Naive thymus-derived CD4-positive, alpha-beta T cell (primary cell): ENCODE measurements at regions of chr6 and their contacts with region 1.

Region 1: DNA sequence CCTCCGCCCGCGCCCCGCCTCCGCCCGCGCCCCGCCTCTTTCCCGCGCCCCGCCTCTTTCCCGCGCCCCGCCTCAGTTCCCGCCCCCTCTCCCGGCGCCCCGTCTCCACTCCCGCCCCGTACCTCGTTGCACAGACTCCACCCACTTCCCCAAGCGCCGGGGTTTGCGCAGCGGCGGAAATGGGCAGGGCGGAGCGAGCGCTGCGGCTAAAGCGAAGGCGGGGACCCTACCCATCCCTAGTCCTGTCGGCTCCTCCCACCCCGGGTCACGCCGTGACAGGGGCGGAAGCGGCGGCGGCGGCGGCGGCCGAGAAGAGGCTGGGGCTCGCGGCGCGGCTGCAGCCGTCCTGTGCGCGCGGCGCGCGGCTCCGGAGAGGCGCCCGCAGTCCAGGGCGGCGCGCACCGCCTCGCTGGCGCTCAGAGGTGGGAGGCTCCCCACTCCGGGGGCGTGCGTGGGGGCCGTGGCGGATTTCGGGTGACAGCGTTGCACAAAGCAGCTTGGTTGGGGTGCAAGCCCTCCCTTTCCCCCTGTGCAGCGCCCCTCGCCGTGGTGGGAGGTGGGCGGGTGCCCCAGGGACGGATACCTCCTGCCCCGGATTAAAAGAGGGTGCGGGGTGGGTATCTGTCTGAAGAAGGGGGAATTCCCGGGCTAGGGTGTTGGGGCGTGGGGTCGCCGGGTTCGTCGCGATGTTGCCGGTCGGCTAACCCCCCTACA is at the start of gene KDM1B:
- DNase-seq: peak; percentile 95 to 100 (median 99)
- ATAC-seq: peak; percentile 95
- H3K4me3 ChIP-seq: peak within 1 kb of the TSS; percentile 95
- H3K4me3 Mint-ChIP-seq: peak within 1 kb of the TSS; percentile 91 to 99 (median 99)
- H3K27ac ChIP-seq: peak within 1 kb of the TSS; percentile 93
- H3K27ac Mint-ChIP-seq: peak within 1 kb of the TSS; percentile 91 to 99 (median 97)
- H3K4me1 ChIP-seq: peaks cover 8 to 17% of the 10 kb centered on the region in 2 donors
- H3K4me1 Mint-ChIP-seq: peaks cover 24 to 36% (median 28%) of the 10 kb centered on the region in 7 donors
- H3K27me3 ChIP-seq: no peaks in the 10 kb centered on the region
- H3K27me3 Mint-ChIP-seq: peaks cover 0 to 7% (median 0%) of the 10 kb centered on the region in 5 donors
- total RNA-seq, gene KDM1B: 7.3 to 25.4 (median 12.5) TPM

Region 2: DNA sequence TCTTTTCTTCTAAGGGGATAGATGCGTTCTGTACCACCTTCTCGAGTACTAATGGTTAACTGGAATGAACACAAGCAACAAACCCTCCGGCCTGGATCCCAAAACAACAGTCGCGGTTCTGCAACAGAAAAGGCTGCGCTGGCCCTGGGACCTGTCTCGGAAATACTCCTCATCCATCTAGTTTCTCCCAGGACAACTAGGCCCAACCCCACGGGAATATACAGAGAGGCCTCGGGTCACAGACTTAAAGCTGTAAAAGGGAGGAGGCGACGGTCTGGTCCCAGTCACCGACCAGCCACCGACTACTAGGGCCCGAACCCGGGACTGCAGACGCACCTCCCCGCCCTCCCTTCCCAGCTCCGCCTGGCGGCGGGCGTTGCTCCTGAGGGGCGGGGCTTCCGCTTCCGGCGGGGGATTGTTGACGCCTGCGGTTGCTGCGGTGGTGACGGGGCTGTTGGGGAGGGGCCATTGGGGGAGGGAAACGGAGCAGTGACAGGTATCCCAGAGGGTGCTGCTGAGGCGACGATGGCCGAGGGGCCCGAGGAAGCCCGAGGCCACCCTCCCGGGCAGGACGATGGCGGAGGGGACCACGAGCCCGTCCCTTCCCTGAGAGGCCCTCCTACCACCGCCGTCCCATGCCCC is 555.3 kb before region 1 on chr6 and contains the start of gene FAM8A1:
- CTCF ChIA-PET with region 1: no interaction called
- POLR2A ChIA-PET with region 1: no interaction called
- intact Hi-C with region 1: loop called (anchors 1 kb)
- DNase-seq: peak; percentile 91 to 97 (median 94)
- ATAC-seq: peak; percentile 97
- H3K4me3 ChIP-seq: peak within 1 kb of the TSS; percentile 49
- H3K4me3 Mint-ChIP-seq: peak within 1 kb of the TSS; percentile 85 to 97 (median 94)
- H3K27ac ChIP-seq: peak within 1 kb of the TSS; percentile 94
- H3K27ac Mint-ChIP-seq: peak within 1 kb of the TSS; percentile 84 to 96 (median 93)
- H3K4me1 ChIP-seq: peaks cover 19 to 29% of the 10 kb centered on the region in 2 donors
- H3K4me1 Mint-ChIP-seq: peaks cover 29 to 48% (median 45%) of the 10 kb centered on the region in 7 donors
- H3K27me3 ChIP-seq: no peaks in the 10 kb centered on the region
- H3K27me3 Mint-ChIP-seq: no peaks in the 10 kb centered on the region
- total RNA-seq, gene FAM8A1: 8.0 to 26.1 (median 21.1) TPM

Region 3: GRCh38 chr6:17987576-17988421 is 167.5 kb before region 1 on chr6 and contains the start of gene KIF13A:
- CTCF ChIA-PET with region 1: no interaction called
- POLR2A ChIA-PET with region 1: no interaction called
- intact Hi-C with region 1: loop called (anchors 1 to 5 kb)
- DNase-seq: peak in 6 of 9 donors; percentile 4 to 53 (median 12)
- ATAC-seq: peak; percentile 74
- H3K4me3 ChIP-seq: peak within 1 kb of the TSS; percentile 52
- H3K4me3 Mint-ChIP-seq: peak within 1 kb of the TSS; percentile 86 to 97 (median 90)
- H3K27ac ChIP-seq: no peak within 1 kb of the TSS
- H3K27ac Mint-ChIP-seq: peak within 1 kb of the TSS in 2 of 9 donors; percentile 4 to 55
- H3K4me1 ChIP-seq: peaks cover 6 to 7% of the 10 kb centered on the region in 2 donors
- H3K4me1 Mint-ChIP-seq: peaks cover 5 to 25% (median 12%) of the 10 kb centered on the region in 7 donors
- H3K27me3 ChIP-seq: peaks cover 0 to 5% of the 10 kb centered on the region in 2 donors
- H3K27me3 Mint-ChIP-seq: peaks cover 35 to 67% (median 46%) of the 10 kb centered on the region in 5 donors
- total RNA-seq, gene KIF13A: 0.05 to 21.0 (median 0.97) TPM

Region 4: DNA sequence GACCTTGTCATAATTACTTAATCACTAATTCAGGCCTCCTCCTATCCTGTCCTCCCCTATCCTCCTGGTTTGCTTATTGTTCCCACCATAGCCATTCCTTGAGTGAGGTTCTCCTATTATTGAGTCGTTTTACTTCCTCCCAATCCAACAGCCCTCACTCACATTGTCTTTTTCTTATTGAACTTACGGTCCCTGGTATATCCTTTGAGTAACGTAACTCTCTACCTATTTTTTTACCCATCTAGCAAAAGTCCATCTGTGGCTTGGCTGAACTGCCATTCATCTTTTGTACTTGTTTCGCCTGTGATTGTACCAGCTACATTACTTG is 65.9 kb after region 1 on chr6:
- CTCF ChIA-PET with region 1: no interaction called
- POLR2A ChIA-PET with region 1: no interaction called
- intact Hi-C with region 1: loop called in 1 of 2 experiments (anchors 5 kb)
- DNase-seq: no peak
- ATAC-seq: no peak
- H3K4me3 ChIP-seq: no peak overlapping the region
- H3K4me3 Mint-ChIP-seq: no peak overlapping the region
- H3K27ac ChIP-seq: no peak overlapping the region
- H3K27ac Mint-ChIP-seq: peak overlapping the region in 6 of 9 donors; percentile 3 to 70 (median 50)
- H3K4me1 ChIP-seq: no peaks in the 10 kb centered on the region
- H3K4me1 Mint-ChIP-seq: no peaks in the 10 kb centered on the region
- H3K27me3 ChIP-seq: no peaks in the 10 kb centered on the region
- H3K27me3 Mint-ChIP-seq: no peaks in the 10 kb centered on the region

Region 5: DNA sequence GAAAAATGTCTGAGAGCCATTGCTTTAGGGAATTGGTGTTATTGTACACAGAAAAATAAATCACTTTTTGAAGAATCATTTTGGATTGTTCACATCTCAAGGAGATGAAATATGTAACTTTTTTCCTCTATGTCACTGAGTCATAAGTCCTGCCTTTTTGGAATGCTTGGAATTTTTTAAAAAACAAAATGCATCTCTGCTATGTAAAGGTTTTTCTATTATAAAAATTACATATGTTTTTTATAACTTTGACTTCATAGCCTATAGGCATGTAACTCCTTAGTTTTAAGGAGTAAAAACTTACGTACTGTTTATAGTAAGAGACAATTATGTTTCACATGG is 240.5 kb after region 1 on chr6:
- CTCF ChIA-PET with region 1: no interaction called
- POLR2A ChIA-PET with region 1: no interaction called
- intact Hi-C with region 1: no loop called
- DNase-seq: no peak
- ATAC-seq: no peak
- H3K4me3 ChIP-seq: no peak overlapping the region
- H3K4me3 Mint-ChIP-seq: no peak overlapping the region
- H3K27ac ChIP-seq: no peak overlapping the region
- H3K27ac Mint-ChIP-seq: no peak overlapping the region
- H3K4me1 ChIP-seq: peaks cover 0 to 7% of the 10 kb centered on the region in 2 donors
- H3K4me1 Mint-ChIP-seq: peaks cover 6 to 31% (median 22%) of the 10 kb centered on the region in 7 donors
- H3K27me3 ChIP-seq: no peaks in the 10 kb centered on the region
- H3K27me3 Mint-ChIP-seq: peaks cover 0 to 7% (median 0%) of the 10 kb centered on the region in 5 donors

Region 6: GRCh38 chr6:18503593-18504231 is 348.4 kb after region 1 on chr6:
- CTCF ChIA-PET with region 1: no interaction called
- POLR2A ChIA-PET with region 1: no interaction called
- intact Hi-C with region 1: loop called in 1 of 2 experiments (anchors 2 kb)
- DNase-seq: peak in 6 of 9 donors; percentile 19 to 54 (median 38)
- ATAC-seq: peak; percentile 63
- H3K4me3 ChIP-seq: no peak overlapping the region
- H3K4me3 Mint-ChIP-seq: peak overlapping the region in 2 of 10 donors; percentile 29 to 50
- H3K27ac ChIP-seq: no peak overlapping the region
- H3K27ac Mint-ChIP-seq: no peak overlapping the region
- H3K4me1 ChIP-seq: no peaks in the 10 kb centered on the region
- H3K4me1 Mint-ChIP-seq: peaks cover 0 to 4% (median 0%) of the 10 kb centered on the region in 7 donors
- H3K27me3 ChIP-seq: no peaks in the 10 kb centered on the region
- H3K27me3 Mint-ChIP-seq: peaks cover 0 to 7% (median 4%) of the 10 kb centered on the region in 5 donors